OCI-LY7 (cell line): ENCODE measurements at regions of chrX and their contacts with region 1.

Region 1: DNA sequence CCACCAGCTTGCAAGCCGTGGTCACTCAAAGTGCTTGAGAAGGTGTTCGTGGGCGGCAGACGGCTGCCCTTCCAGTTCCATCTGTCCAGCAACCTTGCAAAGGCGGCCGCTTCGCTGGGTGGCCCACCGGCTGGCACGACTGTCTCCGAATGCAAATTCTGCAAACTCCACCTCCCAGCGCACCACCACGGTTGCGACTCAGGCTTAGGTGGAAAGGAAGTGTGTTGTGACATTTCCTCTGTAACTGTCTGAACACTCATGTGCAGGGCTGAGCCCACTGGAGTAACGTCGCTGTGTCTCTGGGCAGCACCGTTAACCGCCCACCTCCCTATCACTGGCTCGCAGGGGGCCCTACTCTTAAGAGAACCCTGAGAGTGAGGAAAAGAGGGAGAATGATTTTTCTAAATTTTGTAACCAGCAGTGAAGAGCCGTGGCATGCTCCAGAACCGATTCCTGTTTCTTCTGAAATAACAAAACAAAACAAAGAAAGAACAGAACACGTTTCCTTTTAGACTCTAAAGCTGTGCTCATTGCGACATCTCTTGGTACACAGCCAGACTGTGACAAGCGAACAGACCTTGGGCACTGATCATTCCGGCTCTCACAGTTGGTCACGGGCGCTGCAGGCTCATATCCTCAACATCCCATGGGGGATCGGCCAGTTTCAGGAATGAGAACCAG is at the start of gene P2RY8:
- DNase-seq: peak; percentile 91
- H3K4me3 ChIP-seq: peak within 1 kb of the TSS; percentile 87
- H3K27ac ChIP-seq: peak within 1 kb of the TSS; percentile 94
- H3K4me1 ChIP-seq: peaks cover 18% of the 10 kb centered on the region
- CTCF ChIP-seq: peak; percentile 78
- total RNA-seq, gene P2RY8: 88.3 and 110 TPM in 2 replicates

Region 2: GRCh38 chrX:1468250-1468772 is 68.9 kb before region 1 on chrX:
- CTCF ChIA-PET with region 1: no interaction called
- POLR2A ChIA-PET with region 1: no interaction called
- intact Hi-C with region 1: loop called (anchors 1 kb)
- DNase-seq: peak; percentile 96
- H3K4me3 ChIP-seq: peak overlapping the region; percentile 55
- H3K27ac ChIP-seq: peak overlapping the region; percentile 97
- H3K4me1 ChIP-seq: peaks cover 88% of the 10 kb centered on the region
- CTCF ChIP-seq: peak; percentile 67

Region 3: DNA sequence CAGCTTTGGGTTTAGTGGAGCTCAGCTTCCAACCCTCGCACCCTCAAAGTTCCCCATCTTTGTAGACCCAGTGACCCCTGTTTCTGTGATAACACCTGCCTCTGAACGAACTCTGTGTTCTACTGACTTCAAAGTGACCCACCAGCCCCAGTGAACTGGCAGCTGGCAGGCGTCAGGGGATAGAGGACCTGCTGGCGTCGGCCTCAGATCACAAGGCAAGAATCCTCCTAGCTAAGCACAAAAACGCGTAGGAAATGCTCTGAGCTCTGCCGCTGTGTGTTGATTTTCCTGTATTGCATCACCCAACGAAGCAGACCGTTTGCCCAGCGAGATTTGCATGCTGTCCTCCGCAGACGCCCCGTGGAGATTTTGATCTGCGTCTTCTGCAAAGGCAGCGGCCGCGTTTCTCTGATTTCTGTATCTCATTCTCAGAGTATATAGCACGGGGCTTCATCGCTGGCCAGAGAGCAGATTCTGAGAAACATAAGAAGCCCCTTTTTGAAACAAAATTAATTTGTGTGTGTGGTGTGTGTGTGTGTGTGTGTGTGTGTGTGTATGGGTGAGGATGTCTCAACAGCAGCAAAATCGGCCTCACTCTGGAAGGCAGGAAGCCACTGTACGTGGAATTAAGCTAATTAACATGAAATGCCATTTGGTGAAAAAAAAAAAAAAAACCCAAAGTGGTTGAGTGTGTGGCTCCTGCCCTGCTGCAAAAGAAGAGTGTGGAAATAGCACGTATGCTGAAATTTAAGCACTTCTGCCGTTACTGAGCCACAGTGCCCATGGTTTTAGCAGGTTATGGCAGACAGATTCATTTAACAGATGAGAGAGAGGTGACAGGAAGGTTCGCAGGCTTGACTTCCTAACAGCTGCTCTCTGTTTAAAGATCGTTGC is 55.3 kb before region 1 on chrX:
- CTCF ChIA-PET with region 1: no interaction called
- POLR2A ChIA-PET with region 1: no interaction called
- intact Hi-C with region 1: loop called (anchors 5 kb)
- DNase-seq: peak; percentile 98
- H3K4me3 ChIP-seq: peak overlapping the region; percentile 54
- H3K27ac ChIP-seq: peak overlapping the region; percentile 100
- H3K4me1 ChIP-seq: peaks cover 96% of the 10 kb centered on the region
- CTCF ChIP-seq: no peak

Region 4: GRCh38 chrX:1491851-1492349 is 45.3 kb before region 1 on chrX:
- CTCF ChIA-PET with region 1: no interaction called
- POLR2A ChIA-PET with region 1: no interaction called
- intact Hi-C with region 1: loop called (anchors 2 kb)
- DNase-seq: peak; percentile 97
- H3K4me3 ChIP-seq: peak overlapping the region; percentile 73
- H3K27ac ChIP-seq: peak overlapping the region; percentile 88
- H3K4me1 ChIP-seq: peaks cover 60% of the 10 kb centered on the region
- CTCF ChIP-seq: no peak

Region 5: GRCh38 chrX:1502241-1502640 is 34.9 kb before region 1 on chrX:
- CTCF ChIA-PET with region 1: no interaction called
- POLR2A ChIA-PET with region 1: no interaction called
- intact Hi-C with region 1: loop called (anchors 1 kb)
- DNase-seq: peak; percentile 98
- H3K4me3 ChIP-seq: peak overlapping the region; percentile 33
- H3K27ac ChIP-seq: peak overlapping the region; percentile 96
- H3K4me1 ChIP-seq: peaks cover 91% of the 10 kb centered on the region
- CTCF ChIP-seq: no peak

Region 6: DNA sequence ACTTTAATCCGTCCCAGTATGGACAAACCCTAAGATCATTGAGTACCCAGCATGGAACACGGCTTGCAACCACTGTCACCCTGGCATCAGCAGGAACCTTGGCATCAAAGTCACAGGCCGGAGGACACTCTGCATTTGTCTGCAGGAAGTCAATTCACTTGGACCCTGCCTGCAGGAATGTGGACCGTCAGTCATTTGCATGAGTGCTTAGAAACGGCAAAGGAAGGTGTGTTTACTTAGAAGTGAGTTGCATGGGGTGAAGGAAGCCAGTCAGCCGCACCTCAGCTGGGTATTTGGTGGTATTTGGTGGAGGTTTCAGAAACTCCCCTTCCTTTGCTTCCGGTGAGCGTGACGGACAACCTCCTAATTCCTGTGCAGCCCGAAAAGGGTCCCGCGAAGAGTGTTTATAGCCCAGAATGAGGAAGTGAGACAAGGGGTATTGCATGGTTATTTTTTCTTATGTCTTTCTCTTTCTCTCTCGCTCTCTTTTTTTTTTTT is 15.7 kb before region 1 on chrX:
- CTCF ChIA-PET with region 1: no interaction called
- POLR2A ChIA-PET with region 1: no interaction called
- intact Hi-C with region 1: loop called (anchors 1 kb)
- DNase-seq: peak; percentile 99
- H3K4me3 ChIP-seq: peak overlapping the region; percentile 58
- H3K27ac ChIP-seq: peak overlapping the region; percentile 91
- H3K4me1 ChIP-seq: peaks cover 67% of the 10 kb centered on the region
- CTCF ChIP-seq: no peak

Region 7: DNA sequence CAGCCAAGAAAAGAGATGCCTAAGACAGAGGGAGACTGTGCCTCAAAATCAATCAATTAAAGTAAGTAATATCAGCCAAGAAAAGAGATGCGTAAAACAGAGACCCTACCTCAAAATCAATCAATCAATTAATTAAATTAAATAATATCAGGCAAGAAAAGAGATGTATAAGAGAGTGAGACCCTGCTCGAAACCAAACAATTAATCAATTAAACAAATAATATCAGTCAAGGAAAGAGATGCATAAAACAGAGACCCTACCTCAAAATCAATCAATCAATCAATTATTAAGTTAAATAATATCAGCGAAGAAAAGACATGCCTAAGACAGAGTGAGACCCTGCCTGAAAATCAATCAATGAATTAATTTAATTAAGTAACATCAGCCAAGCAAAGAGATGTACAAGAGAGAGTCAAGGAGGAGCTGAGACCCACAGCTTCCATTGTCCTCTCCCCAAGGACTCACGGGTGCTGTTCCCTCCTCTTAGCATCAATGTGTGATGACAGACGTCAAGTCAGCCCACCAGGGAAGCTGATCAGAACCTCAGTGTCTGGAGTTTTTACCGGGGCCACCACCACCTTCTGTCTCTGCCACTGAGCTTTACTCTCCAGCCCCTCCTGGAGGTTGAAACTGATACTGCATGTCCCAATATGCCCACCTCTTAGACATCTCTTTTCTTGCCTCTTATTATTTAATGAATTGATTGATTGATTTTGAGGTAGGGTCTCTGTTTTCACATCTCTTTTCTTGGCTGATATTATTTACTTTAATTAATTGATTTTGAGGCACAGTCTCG is 43.8 kb after region 1 on chrX:
- CTCF ChIA-PET with region 1: no interaction called
- POLR2A ChIA-PET with region 1: no interaction called
- intact Hi-C with region 1: loop called (anchors 2 kb)
- DNase-seq: peak; percentile 85
- H3K4me3 ChIP-seq: no peak overlapping the region
- H3K27ac ChIP-seq: no peak overlapping the region
- H3K4me1 ChIP-seq: peaks cover 16% of the 10 kb centered on the region
- CTCF ChIP-seq: peak; percentile 90